ENCODE measurements at regions of chr4 and their contacts with region 1.

Region 1: GRCh38 chr4:90165883-90166282 is 38.7 kb downstream of the CCSER1 start:
- DNase-seq: peak; percentile 25
- ATAC-seq: peak; percentile 91
- H3K4me3 ChIP-seq: no peak overlapping the region
- H3K27ac ChIP-seq: no peak overlapping the region
- H3K4me1 ChIP-seq: peaks cover 3% of the 10 kb centered on the region; the same call in 1 of the 2 replicates
- H3K27me3 ChIP-seq: no peaks in the 10 kb centered on the region
- CTCF ChIP-seq: no peak
- EP300 ChIP-seq: peak; percentile 48 to 85; a peak in 2 of 4 replicates
- POLR2A ChIP-seq: no peak
- RAD21 ChIP-seq: no peak

Region 2: GRCh38 chr4:90127223-90127705 is 38.6 kb before region 1 on chr4 and contains the start of gene CCSER1:
- CTCF ChIA-PET with region 1: no interaction called
- POLR2A ChIA-PET with region 1: no interaction called
- RAD21 ChIA-PET with region 1: no interaction called
- SMC1A ChIA-PET with region 1: no interaction called
- in situ Hi-C with region 1: no loop called
- intact Hi-C with region 1: loop called (anchors 5 kb)
- DNase-seq: no peak
- ATAC-seq: peak; percentile 78
- H3K4me3 ChIP-seq: peak within 1 kb of the TSS; percentile 81
- H3K27ac ChIP-seq: peak within 1 kb of the TSS; percentile 68
- H3K4me1 ChIP-seq: peaks cover 6% of the 10 kb centered on the region
- H3K27me3 ChIP-seq: peaks cover 0 to 2% of the 10 kb centered on the region in 2 experiments; a peak in 2 of 4 replicates
- CTCF ChIP-seq: no peak
- EP300 ChIP-seq: no peak
- POLR2A ChIP-seq: peak; percentile 98
- RAD21 ChIP-seq: no peak
- polyA plus RNA-seq, gene CCSER1: 0.22 to 0.26 TPM

Region 3: GRCh38 chr4:90474484-90474883 is 308.6 kb after region 1 on chr4:
- CTCF ChIA-PET with region 1: no interaction called
- POLR2A ChIA-PET with region 1: no interaction called
- RAD21 ChIA-PET with region 1: no interaction called
- SMC1A ChIA-PET with region 1: no interaction called
- in situ Hi-C with region 1: no loop called
- intact Hi-C with region 1: no loop called
- DNase-seq: no peak
- ATAC-seq: no peak
- H3K4me3 ChIP-seq: no peak overlapping the region
- H3K27ac ChIP-seq: no peak overlapping the region
- H3K4me1 ChIP-seq: no peaks in the 10 kb centered on the region
- H3K27me3 ChIP-seq: no peaks in the 10 kb centered on the region
- CTCF ChIP-seq: no peak
- EP300 ChIP-seq: no peak
- POLR2A ChIP-seq: no peak
- RAD21 ChIP-seq: no peak